ENCODE measurements at regions of chr3 and their contacts with region 1.

Region 1: GRCh38 chr3:44323341-44323955 is 15.1 kb upstream of the TCAIM start:
- DNase-seq: peak; percentile 80
- H3K4me3 ChIP-seq: no peak overlapping the region
- H3K27ac ChIP-seq: no peak overlapping the region
- H3K4me1 ChIP-seq: no peaks in the 10 kb centered on the region
- H3K27me3 ChIP-seq: peaks cover 0 to 3% of the 10 kb centered on the region in 2 experiments
- CTCF ChIP-seq: peak; percentile 63 to 65
- POLR2A ChIP-seq: no peak

Region 2: DNA sequence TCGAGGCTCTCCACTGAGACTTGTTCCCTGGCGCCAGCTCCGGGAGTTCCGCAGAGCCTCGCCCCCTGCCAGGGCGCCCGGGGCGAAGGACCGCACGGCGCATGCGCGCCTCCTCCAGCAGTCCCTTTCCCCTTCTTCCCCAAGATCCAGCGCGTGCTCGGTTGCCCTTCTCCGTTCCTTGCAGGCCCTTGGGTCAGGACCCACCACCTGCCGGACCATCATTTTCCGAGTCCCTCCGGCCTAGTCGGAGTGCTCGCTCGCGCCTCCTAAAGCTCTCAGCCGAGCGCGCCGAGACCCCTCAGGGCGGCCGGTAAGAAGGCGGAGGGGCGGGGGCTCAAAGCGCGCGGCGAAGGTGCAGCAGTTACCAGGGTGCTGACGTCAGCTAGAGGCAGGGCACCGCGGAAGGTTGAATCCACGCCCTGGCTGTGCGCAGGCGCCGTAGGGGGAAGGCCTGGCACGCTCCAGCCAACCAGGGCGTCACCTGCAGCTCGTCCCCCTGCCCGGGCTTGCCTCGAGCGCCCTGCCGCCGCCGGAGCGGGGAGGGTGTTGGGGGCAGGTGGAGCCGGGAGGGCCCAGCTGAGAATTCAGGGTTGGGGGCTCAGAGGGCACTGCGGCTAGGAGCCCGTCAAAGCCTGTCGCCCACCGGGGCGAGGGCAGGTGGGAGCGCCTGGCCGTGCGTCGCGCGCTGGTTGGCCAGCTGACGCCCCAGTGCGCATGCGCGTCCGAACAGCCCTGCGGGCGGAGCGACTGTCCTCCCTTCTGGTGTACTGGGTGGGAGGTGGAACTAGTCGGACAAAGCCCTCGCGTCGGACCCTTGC is 14.8 kb after region 1 on chr3 and contains the start of gene TCAIM:
- CTCF ChIA-PET with region 1: interaction called, 10 read pairs
- POLR2A ChIA-PET with region 1: no interaction called
- dilution Hi-C with region 1: no loop called
- intact Hi-C with region 1: loop called (anchors 1 kb)
- DNase-seq: peak; percentile 98
- H3K4me3 ChIP-seq: peak within 1 kb of the TSS; percentile 65 to 94 (median 68)
- H3K27ac ChIP-seq: peak within 1 kb of the TSS; percentile 55
- H3K4me1 ChIP-seq: peaks cover 9% of the 10 kb centered on the region
- H3K27me3 ChIP-seq: peaks cover 4 to 9% of the 10 kb centered on the region in 2 experiments
- CTCF ChIP-seq: no peak
- POLR2A ChIP-seq: peak; percentile 76
- total RNA-seq, gene TCAIM: 18.2 and 19.6 TPM in 2 replicates

Region 3: GRCh38 chr3:44510000-44510368 is 186.5 kb after region 1 on chr3:
- CTCF ChIA-PET with region 1: interaction called, 8 read pairs
- POLR2A ChIA-PET with region 1: no interaction called
- dilution Hi-C with region 1: no loop called
- intact Hi-C with region 1: loop called (anchors 1 kb)
- DNase-seq: peak; percentile 49
- H3K4me3 ChIP-seq: peak overlapping the region; percentile 80 to 98 (median 88)
- H3K27ac ChIP-seq: peak overlapping the region; percentile 58
- H3K4me1 ChIP-seq: peaks cover 13% of the 10 kb centered on the region
- H3K27me3 ChIP-seq: no peaks in the 10 kb centered on the region
- CTCF ChIP-seq: no peak
- POLR2A ChIP-seq: no peak

Region 4: GRCh38 chr3:44624749-44625480 is 301.5 kb after region 1 on chr3 and contains the start of gene ZNF197:
- CTCF ChIA-PET with region 1: no interaction called
- POLR2A ChIA-PET with region 1: no interaction called
- dilution Hi-C with region 1: no loop called
- intact Hi-C with region 1: loop called (anchors 10 kb)
- DNase-seq: peak; percentile 70
- H3K4me3 ChIP-seq: peak within 1 kb of the TSS; percentile 13 to 69 (median 62)
- H3K27ac ChIP-seq: peak within 1 kb of the TSS; percentile 3
- H3K4me1 ChIP-seq: peaks cover 4% of the 10 kb centered on the region
- H3K27me3 ChIP-seq: no peaks in the 10 kb centered on the region
- CTCF ChIP-seq: no peak
- POLR2A ChIP-seq: peak; percentile 80
- total RNA-seq, gene ZNF197: 6.4 and 7.1 TPM in 2 replicates

Region 5: GRCh38 chr3:44761424-44762169 is 438.1 kb after region 1 on chr3 and contains the starts of genes KIAA1143 and KIF15:
- CTCF ChIA-PET with region 1: interaction called, 3 read pairs
- POLR2A ChIA-PET with region 1: no interaction called
- dilution Hi-C with region 1: no loop called
- intact Hi-C with region 1: loop called (anchors 1 kb)
- DNase-seq: peak; percentile 96
- H3K4me3 ChIP-seq: peak within 1 kb of the TSS; percentile 57 to 91 (median 81)
- H3K27ac ChIP-seq: peak within 1 kb of the TSS; percentile 80
- H3K4me1 ChIP-seq: peaks cover 6% of the 10 kb centered on the region
- H3K27me3 ChIP-seq: no peaks in the 10 kb centered on the region
- CTCF ChIP-seq: no peak
- POLR2A ChIP-seq: peak; percentile 74
- total RNA-seq, gene KIAA1143: 25.2 and 28.1 TPM in 2 replicates
- total RNA-seq, gene KIF15: 20.9 and 21.6 TPM in 2 replicates

Measured in endothelial cell of umbilical vein (primary cell).